Mammary epithelial cell (primary cell): ENCODE measurements at regions of chr13 and their contacts with region 1.

Region 1: GRCh38 chr13:99269627-99270241 is 11.6 kb upstream of the GPR18 start:
- DNase-seq: peak; percentile 35
- H3K4me3 ChIP-seq: no peak overlapping the region
- H3K27ac ChIP-seq: no peak overlapping the region
- H3K4me1 ChIP-seq: peaks cover under 1% of the 10 kb centered on the region
- H3K27me3 ChIP-seq: no peaks in the 10 kb centered on the region
- CTCF ChIP-seq: peak; percentile 64 to 70

Region 2: GRCh38 chr13:99093997-99094396 is 175.7 kb before region 1 on chr13:
- CTCF ChIA-PET with region 1: no interaction called
- dilution Hi-C with region 1: loop called (anchors 10 kb)
- in situ Hi-C with region 1: no loop called
- intact Hi-C with region 1: no loop called
- DNase-seq: peak; percentile 4
- H3K4me3 ChIP-seq: no peak overlapping the region
- H3K27ac ChIP-seq: no peak overlapping the region
- H3K4me1 ChIP-seq: no peaks in the 10 kb centered on the region
- H3K27me3 ChIP-seq: no peaks in the 10 kb centered on the region
- CTCF ChIP-seq: no peak

Region 3: DNA sequence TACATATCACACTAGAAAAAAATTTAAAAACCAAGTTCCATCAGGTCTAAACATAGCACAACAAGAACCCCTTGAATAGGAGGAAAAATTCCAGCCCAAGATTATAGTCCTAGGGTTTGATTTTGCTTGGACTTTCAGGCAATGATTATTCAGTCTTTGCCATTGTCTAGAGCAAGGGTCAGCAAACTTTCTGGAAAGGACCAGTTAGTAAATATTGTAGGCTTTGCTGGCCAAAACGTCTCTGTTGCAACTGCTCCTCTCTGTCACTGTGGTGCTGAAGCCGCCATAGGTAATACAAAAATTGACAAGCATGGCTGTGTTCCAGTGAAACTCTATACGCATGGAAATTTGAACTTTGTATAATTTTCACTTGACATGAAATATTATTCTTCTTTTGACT is 164.6 kb before region 1 on chr13:
- CTCF ChIA-PET with region 1: no interaction called
- dilution Hi-C with region 1: no loop called
- in situ Hi-C with region 1: no loop called
- intact Hi-C with region 1: no loop called
- DNase-seq: no peak
- H3K4me3 ChIP-seq: no peak overlapping the region
- H3K27ac ChIP-seq: no peak overlapping the region
- H3K4me1 ChIP-seq: no peaks in the 10 kb centered on the region
- H3K27me3 ChIP-seq: no peaks in the 10 kb centered on the region
- CTCF ChIP-seq: no peak

Region 4: GRCh38 chr13:99176309-99177276 is 93.1 kb before region 1 on chr13:
- CTCF ChIA-PET with region 1: interaction called, 9 read pairs
- dilution Hi-C with region 1: loop called (anchors 5 kb)
- in situ Hi-C with region 1: loop called (anchors 10 kb)
- intact Hi-C with region 1: loop called (anchors 1 kb)
- DNase-seq: peak; percentile 44
- H3K4me3 ChIP-seq: no peak overlapping the region
- H3K27ac ChIP-seq: no peak overlapping the region
- H3K4me1 ChIP-seq: no peaks in the 10 kb centered on the region
- H3K27me3 ChIP-seq: no peaks in the 10 kb centered on the region
- CTCF ChIP-seq: peak; percentile 93 to 97

Region 5: DNA sequence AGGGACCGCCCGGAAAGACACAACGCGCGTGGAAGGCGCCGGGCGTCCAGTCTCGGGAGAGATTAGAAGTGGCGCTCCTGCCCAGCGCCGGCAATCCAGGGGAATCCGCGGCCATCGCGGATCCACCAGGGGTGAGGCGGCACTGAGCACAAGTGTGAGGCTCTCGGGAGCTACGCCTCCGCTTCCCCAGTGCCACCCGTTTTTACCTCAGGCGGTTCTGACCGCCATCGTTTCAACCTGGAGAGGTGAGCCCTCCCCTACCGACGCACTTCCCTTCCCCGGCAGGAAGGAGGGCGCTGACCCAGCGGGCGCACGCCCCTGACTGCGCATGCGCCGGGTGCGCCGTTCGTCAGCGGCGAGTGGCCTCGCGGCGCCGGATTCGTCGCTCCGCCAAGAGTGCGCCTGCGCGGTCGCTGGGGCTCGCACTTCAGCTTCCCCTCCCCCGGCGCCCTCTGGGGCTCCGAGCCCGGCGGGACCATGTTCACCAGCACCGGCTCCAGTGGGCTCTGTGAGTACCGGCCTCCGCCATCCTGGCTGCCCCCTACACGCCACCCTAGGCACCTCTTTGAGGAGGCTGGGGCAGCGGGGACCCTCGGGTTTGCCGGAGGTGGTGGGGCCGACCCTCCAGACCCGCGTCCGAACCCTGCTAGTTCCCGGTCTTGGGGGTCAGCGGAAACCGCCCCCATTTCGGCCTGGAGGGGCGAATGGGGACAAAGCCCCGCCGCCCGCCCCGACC is 69.1 kb before region 1 on chr13 and contains the start of gene UBAC2:
- CTCF ChIA-PET with region 1: interaction called, 7 read pairs
- dilution Hi-C with region 1: no loop called
- in situ Hi-C with region 1: no loop called
- intact Hi-C with region 1: loop called (anchors 1 kb)
- DNase-seq: peak; percentile 94
- H3K4me3 ChIP-seq: peak within 1 kb of the TSS; percentile 83 to 98 (median 84)
- H3K27ac ChIP-seq: peak within 1 kb of the TSS; percentile 79
- H3K4me1 ChIP-seq: peaks cover 23% of the 10 kb centered on the region
- H3K27me3 ChIP-seq: no peaks in the 10 kb centered on the region
- CTCF ChIP-seq: no peak
- total RNA-seq, gene UBAC2: 48.2 to 57.7 TPM

Region 6: DNA sequence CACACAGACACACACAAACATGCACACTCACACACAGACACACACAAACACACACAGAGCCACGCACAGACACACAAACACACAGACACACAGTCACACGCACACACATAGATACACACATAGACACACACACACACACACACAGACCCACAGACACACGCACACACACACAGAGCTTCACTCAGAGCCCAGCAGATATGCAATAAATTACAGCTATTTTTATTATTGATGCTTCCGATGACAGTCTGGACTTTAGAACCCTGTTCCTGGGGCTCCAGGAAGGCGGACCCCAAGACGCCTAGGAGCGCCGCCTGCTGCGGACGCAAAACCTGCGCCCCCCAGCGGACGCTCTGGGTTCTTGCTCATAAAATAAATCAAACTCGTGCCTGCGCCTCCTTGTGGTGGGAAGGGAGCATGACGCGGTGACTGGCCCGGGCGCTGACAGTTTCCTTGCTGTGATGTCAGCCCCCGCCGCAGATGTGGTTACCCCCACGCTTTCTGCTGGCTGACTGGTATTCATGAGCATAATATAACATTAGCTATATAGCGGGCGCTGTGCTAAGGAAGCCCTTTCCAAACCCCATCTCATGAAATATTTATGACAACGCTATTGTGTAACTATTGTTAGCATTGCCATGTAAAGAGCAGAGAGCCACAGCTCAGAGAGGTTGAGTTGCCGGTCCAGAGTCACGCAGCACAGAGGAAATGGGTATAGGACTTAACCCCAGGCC is 167.1 kb after region 1 on chr13:
- CTCF ChIA-PET with region 1: interaction called, 7 read pairs
- dilution Hi-C with region 1: no loop called
- in situ Hi-C with region 1: loop called (anchors 10 kb)
- intact Hi-C with region 1: loop called (anchors 1 kb)
- DNase-seq: peak; percentile 68
- H3K4me3 ChIP-seq: peak overlapping the region in 1 of 3 experiments; percentile 18
- H3K27ac ChIP-seq: no peak overlapping the region
- H3K4me1 ChIP-seq: peaks cover 10% of the 10 kb centered on the region
- H3K27me3 ChIP-seq: no peaks in the 10 kb centered on the region
- CTCF ChIP-seq: peak; percentile 99 to 100